ENCODE measurements at regions of chr15 and their contacts with region 1.

Region 1: GRCh38 chr15:53000410-53000809 is 210.3 kb upstream of the ONECUT1 start:
- DNase-seq: no peak
- ATAC-seq: no peak
- H3K4me3 ChIP-seq: no peak overlapping the region
- H3K27ac ChIP-seq: no peak overlapping the region
- H3K4me1 ChIP-seq: no peaks in the 10 kb centered on the region
- H3K27me3 ChIP-seq: no peaks in the 10 kb centered on the region
- CTCF ChIP-seq: no peak

Region 2: GRCh38 chr15:52879904-52880303 is 120.5 kb before region 1 on chr15:
- intact Hi-C with region 1: no loop called
- DNase-seq: no peak
- ATAC-seq: no peak
- H3K4me3 ChIP-seq: no peak overlapping the region
- H3K27ac ChIP-seq: no peak overlapping the region
- H3K4me1 ChIP-seq: no peaks in the 10 kb centered on the region
- H3K27me3 ChIP-seq: peaks cover 0 to 11% (median 0%) of the 10 kb centered on the region in 7 donors
- CTCF ChIP-seq: no peak

Region 3: DNA sequence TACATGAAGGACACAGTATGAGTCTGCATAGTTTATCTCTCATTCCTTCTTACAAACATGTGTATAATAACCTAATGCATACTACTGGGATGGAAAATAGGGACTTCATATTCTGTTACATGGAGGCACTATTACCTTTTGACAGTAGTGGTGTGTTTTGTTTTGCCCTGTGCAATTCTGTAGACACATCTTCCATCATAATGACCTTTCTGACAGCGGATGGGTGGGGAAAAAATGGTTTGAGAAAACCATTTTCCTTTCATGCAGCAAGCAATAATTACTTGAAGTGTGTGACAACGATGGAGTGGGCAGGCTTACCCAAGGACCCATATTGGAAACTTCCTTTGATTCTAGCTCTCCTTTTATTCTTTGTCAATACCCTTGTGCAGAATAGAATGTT is 56.7 kb before region 1 on chr15:
- intact Hi-C with region 1: loop called in 1 of 10 experiments (anchors 10 kb)
- DNase-seq: no peak
- ATAC-seq: no peak
- H3K4me3 ChIP-seq: no peak overlapping the region
- H3K27ac ChIP-seq: no peak overlapping the region
- H3K4me1 ChIP-seq: no peaks in the 10 kb centered on the region
- H3K27me3 ChIP-seq: peaks cover 0 to 5% (median 0%) of the 10 kb centered on the region in 7 donors
- CTCF ChIP-seq: no peak

Region 4: GRCh38 chr15:53193149-53193793 is 192.9 kb after region 1 on chr15:
- intact Hi-C with region 1: no loop called
- DNase-seq: no peak
- ATAC-seq: no peak
- H3K4me3 ChIP-seq: no peak overlapping the region
- H3K27ac ChIP-seq: no peak overlapping the region
- H3K4me1 ChIP-seq: peaks cover 0 to 6% (median 0%) of the 10 kb centered on the region in 9 donors
- H3K27me3 ChIP-seq: peaks cover 0 to 22% (median 5%) of the 10 kb centered on the region in 7 donors
- CTCF ChIP-seq: no peak